PC-3 (cell line): ENCODE measurements at regions of chr12 and their contacts with region 1.

Region 1: GRCh38 chr12:109462710-109463692 is 14.1 kb downstream of the KCTD10 start:
- DNase-seq: peak; percentile 94
- ATAC-seq: peak; percentile 77
- H3K4me3 ChIP-seq: peak overlapping the region; percentile 46; the same call in 1 of the 2 replicates
- H3K27ac ChIP-seq: peak overlapping the region; percentile 85
- H3K4me1 ChIP-seq: peaks cover 55% of the 10 kb centered on the region
- H3K27me3 ChIP-seq: no peaks in the 10 kb centered on the region
- CTCF ChIP-seq: no peak

Region 2: GRCh38 chr12:109277899-109278762 is 184.9 kb before region 1 on chr12:
- CTCF ChIA-PET with region 1: no interaction called
- POLR2A ChIA-PET with region 1: no interaction called
- intact Hi-C with region 1: no loop called
- DNase-seq: no peak
- ATAC-seq: peak; percentile 27
- H3K4me3 ChIP-seq: no peak overlapping the region
- H3K27ac ChIP-seq: no peak overlapping the region
- H3K4me1 ChIP-seq: no peaks in the 10 kb centered on the region
- H3K27me3 ChIP-seq: no peaks in the 10 kb centered on the region
- CTCF ChIP-seq: no peak

Region 3: GRCh38 chr12:109377139-109377685 is 85.8 kb before region 1 on chr12:
- CTCF ChIA-PET with region 1: no interaction called
- POLR2A ChIA-PET with region 1: no interaction called
- intact Hi-C with region 1: no loop called
- DNase-seq: no peak
- ATAC-seq: no peak
- H3K4me3 ChIP-seq: no peak overlapping the region
- H3K27ac ChIP-seq: no peak overlapping the region
- H3K4me1 ChIP-seq: no peaks in the 10 kb centered on the region
- H3K27me3 ChIP-seq: peaks cover 72% of the 10 kb centered on the region
- CTCF ChIP-seq: no peak

Region 4: DNA sequence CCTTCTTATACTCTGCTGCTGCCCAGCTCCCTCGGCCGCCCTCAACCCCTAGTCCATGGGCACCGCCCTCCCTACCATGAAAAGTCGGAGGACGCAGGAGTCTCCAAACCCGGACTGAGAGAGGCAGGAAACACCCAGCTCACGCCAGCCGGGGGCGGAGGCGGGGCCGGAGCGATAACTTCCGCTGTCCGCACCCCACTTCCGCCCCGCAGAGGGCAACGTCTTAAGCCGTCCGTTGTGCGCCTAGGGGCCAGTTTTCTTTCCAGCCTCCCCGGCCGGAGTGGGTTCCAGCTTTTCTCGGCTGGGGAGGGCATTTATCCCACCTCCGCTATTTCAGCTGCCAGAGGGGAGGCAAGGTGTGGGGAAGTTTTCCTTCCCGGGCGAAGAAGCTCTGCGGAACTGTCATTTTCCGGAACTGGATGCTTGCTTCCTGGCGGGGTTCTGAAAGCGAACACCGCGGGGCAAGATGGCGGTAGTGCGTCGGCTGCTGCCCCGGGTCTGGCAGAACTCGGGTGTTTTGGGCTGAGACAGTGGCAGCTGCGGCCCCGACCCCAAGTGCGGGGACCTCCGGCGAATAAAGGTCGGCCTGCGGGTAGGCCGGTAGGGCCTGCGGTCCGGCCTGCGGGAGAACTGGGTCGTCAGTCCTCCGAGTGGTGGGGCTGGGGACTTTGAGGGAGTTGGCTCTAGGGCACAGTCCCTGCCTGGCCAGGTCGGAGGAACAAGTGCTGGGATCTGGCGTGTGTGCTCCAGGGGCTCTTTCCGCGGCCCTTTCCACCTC is 14.4 kb after region 1 on chr12 and contains the starts of genes KCTD10 and UBE3B:
- CTCF ChIA-PET with region 1: no interaction called
- POLR2A ChIA-PET with region 1: interaction called, 14 read pairs
- intact Hi-C with region 1: loop called (anchors 1 kb)
- DNase-seq: peak; percentile 93
- ATAC-seq: peak; percentile 93
- H3K4me3 ChIP-seq: peak within 1 kb of the TSS; percentile 90
- H3K27ac ChIP-seq: peak within 1 kb of the TSS; percentile 65
- H3K4me1 ChIP-seq: peaks cover 20% of the 10 kb centered on the region
- H3K27me3 ChIP-seq: no peaks in the 10 kb centered on the region
- CTCF ChIP-seq: no peak
- total RNA-seq, gene KCTD10: 42.3 and 58.1 TPM in 2 replicates
- total RNA-seq, gene UBE3B: 25.7 and 35.6 TPM in 2 replicates

Region 5: DNA sequence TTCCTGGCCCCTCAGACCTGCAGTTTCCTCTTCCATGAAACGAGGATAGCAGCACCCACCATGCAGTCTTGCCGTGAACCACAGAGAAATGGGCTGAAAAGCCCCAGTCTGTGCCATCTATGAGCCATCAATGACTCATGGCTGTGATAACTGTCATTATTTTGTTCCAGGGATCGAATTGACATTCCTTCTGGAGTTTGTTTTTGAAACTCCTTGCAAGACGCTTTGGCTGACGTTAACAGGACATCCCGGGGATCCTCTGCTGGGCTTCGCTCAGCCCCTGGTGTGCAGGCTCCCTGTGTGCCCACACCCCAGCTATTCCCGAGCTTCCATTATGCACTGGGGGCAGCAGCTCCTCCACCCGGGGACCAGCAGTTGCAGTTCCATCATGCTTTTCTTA is 76.5 kb after region 1 on chr12:
- CTCF ChIA-PET with region 1: no interaction called
- POLR2A ChIA-PET with region 1: no interaction called
- intact Hi-C with region 1: no loop called
- DNase-seq: peak; percentile 83
- ATAC-seq: peak; percentile 88
- H3K4me3 ChIP-seq: no peak overlapping the region; the same call in 1 of the 2 replicates
- H3K27ac ChIP-seq: peak overlapping the region; percentile 38
- H3K4me1 ChIP-seq: peaks cover 22% of the 10 kb centered on the region
- H3K27me3 ChIP-seq: no peaks in the 10 kb centered on the region
- CTCF ChIP-seq: no peak